WTC11 (cell line): ENCODE measurements at regions of chr17 and their contacts with region 1.

Region 1: GRCh38 chr17:81094509-81095382 is 59.8 kb downstream of the BAIAP2 start:
- DNase-seq: peak; percentile 75
- ATAC-seq: peak; percentile 37
- H3K4me3 Mint-ChIP-seq: no peak overlapping the region
- H3K27ac Mint-ChIP-seq: peak overlapping the region; percentile 92
- H3K4me1 Mint-ChIP-seq: peaks cover 22% of the 10 kb centered on the region
- H3K27me3 Mint-ChIP-seq: no peaks in the 10 kb centered on the region
- CTCF ChIP-seq: no peak

Region 2: DNA sequence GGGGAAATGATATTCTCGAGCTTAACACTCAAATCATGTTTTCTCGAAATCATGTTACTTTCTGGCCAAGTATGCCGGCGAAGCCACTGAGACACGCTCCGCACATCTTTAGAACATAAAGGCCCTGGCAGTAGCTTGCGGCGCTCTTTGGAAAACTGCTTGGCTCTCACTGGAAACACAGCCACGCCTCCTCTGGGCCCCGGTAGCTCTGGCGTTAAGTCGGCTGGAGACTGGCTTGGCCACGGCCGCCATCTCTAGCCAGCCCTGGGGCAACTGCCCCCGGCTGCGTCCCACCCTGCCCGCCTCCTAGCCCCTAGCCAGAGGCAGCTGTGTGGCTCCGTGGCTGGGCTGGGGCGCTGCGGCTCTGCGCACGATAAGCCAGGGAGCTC is 69.0 kb before region 1 on chr17:
- CTCF ChIA-PET with region 1: interaction called, 32 read pairs
- POLR2A ChIA-PET with region 1: no interaction called
- DNase-seq: no peak
- ATAC-seq: no peak
- H3K4me3 Mint-ChIP-seq: no peak overlapping the region
- H3K27ac Mint-ChIP-seq: no peak overlapping the region
- H3K4me1 Mint-ChIP-seq: peaks cover 5% of the 10 kb centered on the region
- H3K27me3 Mint-ChIP-seq: peaks cover 3% of the 10 kb centered on the region; the same call in 1 of the 2 replicates
- CTCF ChIP-seq: no peak

Region 3: GRCh38 chr17:81076141-81076679 is 18.5 kb before region 1 on chr17:
- CTCF ChIA-PET with region 1: interaction called, 14 read pairs
- POLR2A ChIA-PET with region 1: no interaction called
- DNase-seq: no peak
- ATAC-seq: no peak
- H3K4me3 Mint-ChIP-seq: no peak overlapping the region
- H3K27ac Mint-ChIP-seq: no peak overlapping the region
- H3K4me1 Mint-ChIP-seq: no peaks in the 10 kb centered on the region
- H3K27me3 Mint-ChIP-seq: no peaks in the 10 kb centered on the region
- CTCF ChIP-seq: no peak

Region 4: GRCh38 chr17:81196505-81197408 is 102.0 kb after region 1 on chr17:
- CTCF ChIA-PET with region 1: no interaction called
- POLR2A ChIA-PET with region 1: no interaction called
- DNase-seq: no peak
- ATAC-seq: no peak
- H3K4me3 Mint-ChIP-seq: no peak overlapping the region
- H3K27ac Mint-ChIP-seq: no peak overlapping the region
- H3K4me1 Mint-ChIP-seq: no peaks in the 10 kb centered on the region
- H3K27me3 Mint-ChIP-seq: no peaks in the 10 kb centered on the region
- CTCF ChIP-seq: no peak

Region 5: DNA sequence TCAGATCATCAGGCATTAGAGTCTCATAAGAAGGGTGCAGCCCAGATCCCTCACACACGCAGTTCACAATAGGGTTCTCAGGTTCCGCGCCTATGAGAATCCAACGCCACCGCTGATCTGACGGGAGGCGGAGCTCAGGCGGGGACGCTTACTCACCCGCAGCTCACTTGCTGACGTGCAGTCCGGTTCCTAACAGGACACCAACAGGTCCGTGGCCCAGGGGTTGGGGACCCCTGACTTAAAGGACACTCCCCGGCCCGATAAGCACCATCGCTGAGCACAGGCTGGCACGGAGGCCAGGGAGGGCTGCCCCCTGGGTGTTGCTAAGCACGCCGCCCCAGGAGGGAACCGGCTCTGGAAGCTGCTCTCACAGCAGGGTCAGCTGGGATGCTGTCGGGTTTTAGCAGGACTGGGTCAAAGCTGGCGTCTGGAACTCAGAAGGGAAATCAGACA is 270.4 kb after region 1 on chr17:
- CTCF ChIA-PET with region 1: no interaction called
- POLR2A ChIA-PET with region 1: no interaction called
- DNase-seq: peak; percentile 57
- ATAC-seq: peak; percentile 75
- H3K4me3 Mint-ChIP-seq: peak overlapping the region; percentile 44
- H3K27ac Mint-ChIP-seq: no peak overlapping the region
- H3K4me1 Mint-ChIP-seq: peaks cover 6% of the 10 kb centered on the region
- H3K27me3 Mint-ChIP-seq: peaks cover 26% of the 10 kb centered on the region
- CTCF ChIP-seq: no peak